MCF 10A (cell line): ENCODE measurements at regions of chr11 and their contacts with region 1.

Region 1: DNA sequence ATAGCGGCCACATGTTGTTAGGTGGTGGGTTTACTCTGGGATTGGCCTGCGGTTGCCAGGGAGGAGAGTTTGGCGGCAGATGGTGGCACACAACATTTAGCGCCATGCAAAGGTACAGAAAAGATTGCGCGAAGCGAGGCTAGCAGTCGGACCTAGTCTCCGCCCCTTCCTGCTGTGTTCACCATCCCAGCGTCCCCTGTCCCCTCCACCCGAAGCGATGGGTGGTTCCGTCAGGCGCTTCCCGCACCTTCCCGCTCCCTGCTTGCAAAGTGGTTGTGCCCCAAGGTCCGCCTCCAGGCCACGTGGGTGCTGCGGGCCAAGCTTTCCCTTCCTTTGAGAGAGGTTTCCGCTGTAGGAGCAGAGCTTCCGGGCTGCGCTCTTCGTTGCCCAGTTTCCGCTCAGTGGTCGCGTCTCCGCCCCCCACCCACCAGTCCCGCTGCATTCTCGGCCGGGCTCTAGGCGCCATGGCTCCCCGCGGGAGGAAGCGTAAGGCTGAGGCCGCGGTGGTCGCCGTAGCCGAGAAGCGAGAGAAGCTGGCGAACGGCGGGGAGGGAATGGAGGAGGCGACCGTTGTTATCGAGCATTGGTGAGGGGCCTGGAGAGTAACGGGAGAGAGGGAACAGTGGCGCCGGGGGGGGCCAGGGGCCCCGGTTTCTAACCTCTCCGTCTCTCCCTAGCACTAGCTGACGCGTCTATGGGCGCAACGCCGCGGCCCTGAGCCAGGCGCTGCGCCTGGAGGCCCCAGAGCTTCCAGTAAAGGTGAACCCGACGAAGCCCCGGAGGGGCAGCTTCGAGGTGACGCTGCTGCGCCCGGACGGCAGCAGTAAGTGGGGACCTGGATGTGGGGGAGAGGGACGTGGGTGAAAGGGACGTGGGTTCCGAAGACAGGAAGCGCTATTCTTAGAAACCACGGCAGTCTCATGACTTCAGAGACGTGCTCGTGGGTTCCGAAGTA is at the start of gene SELENOH:
- DNase-seq: peak; percentile 90
- H3K4me3 Mint-ChIP-seq: peak within 1 kb of the TSS; percentile 89
- H3K27ac Mint-ChIP-seq: peak within 1 kb of the TSS; percentile 99
- H3K4me1 Mint-ChIP-seq: no peaks in the 10 kb centered on the region
- H3K27me3 Mint-ChIP-seq: no peaks in the 10 kb centered on the region
- CTCF ChIP-seq: no peak
- total RNA-seq, gene SELENOH: 60.3 and 84.5 TPM in 2 replicates

Region 2: GRCh38 chr11:57778318-57779037 is 37.1 kb after region 1 on chr11:
- CTCF ChIA-PET with region 1: no interaction called
- POLR2A ChIA-PET with region 1: interaction called, 19 read pairs
- intact Hi-C with region 1: no loop called
- DNase-seq: peak; percentile 96
- H3K4me3 Mint-ChIP-seq: peak overlapping the region; percentile 49
- H3K27ac Mint-ChIP-seq: peak overlapping the region; percentile 85
- H3K4me1 Mint-ChIP-seq: peaks cover 58% of the 10 kb centered on the region
- H3K27me3 Mint-ChIP-seq: no peaks in the 10 kb centered on the region
- CTCF ChIP-seq: no peak

Region 3: GRCh38 chr11:57815476-57815875 is 74.1 kb after region 1 on chr11:
- CTCF ChIA-PET with region 1: no interaction called
- POLR2A ChIA-PET with region 1: no interaction called
- intact Hi-C with region 1: no loop called
- DNase-seq: no peak
- H3K4me3 Mint-ChIP-seq: no peak overlapping the region
- H3K27ac Mint-ChIP-seq: no peak overlapping the region
- H3K4me1 Mint-ChIP-seq: no peaks in the 10 kb centered on the region
- H3K27me3 Mint-ChIP-seq: no peaks in the 10 kb centered on the region
- CTCF ChIP-seq: no peak